IMR-90 (cell line): ENCODE measurements at regions of chrX and their contacts with region 1.

Region 1: GRCh38 chrX:24081661-24082264 is 27.0 kb downstream of the EIF2S3 start:
- DNase-seq: peak; percentile 63
- ATAC-seq: peak; percentile 77
- H3K4me3 ChIP-seq: no peak overlapping the region
- H3K27ac ChIP-seq: no peak overlapping the region
- H3K4me1 ChIP-seq: no peaks in the 10 kb centered on the region
- H3K27me3 ChIP-seq: no peaks in the 10 kb centered on the region
- CTCF ChIP-seq: peak; percentile 58
- POLR2A ChIP-seq: no peak
- RAD21 ChIP-seq: peak; percentile 69

Region 2: DNA sequence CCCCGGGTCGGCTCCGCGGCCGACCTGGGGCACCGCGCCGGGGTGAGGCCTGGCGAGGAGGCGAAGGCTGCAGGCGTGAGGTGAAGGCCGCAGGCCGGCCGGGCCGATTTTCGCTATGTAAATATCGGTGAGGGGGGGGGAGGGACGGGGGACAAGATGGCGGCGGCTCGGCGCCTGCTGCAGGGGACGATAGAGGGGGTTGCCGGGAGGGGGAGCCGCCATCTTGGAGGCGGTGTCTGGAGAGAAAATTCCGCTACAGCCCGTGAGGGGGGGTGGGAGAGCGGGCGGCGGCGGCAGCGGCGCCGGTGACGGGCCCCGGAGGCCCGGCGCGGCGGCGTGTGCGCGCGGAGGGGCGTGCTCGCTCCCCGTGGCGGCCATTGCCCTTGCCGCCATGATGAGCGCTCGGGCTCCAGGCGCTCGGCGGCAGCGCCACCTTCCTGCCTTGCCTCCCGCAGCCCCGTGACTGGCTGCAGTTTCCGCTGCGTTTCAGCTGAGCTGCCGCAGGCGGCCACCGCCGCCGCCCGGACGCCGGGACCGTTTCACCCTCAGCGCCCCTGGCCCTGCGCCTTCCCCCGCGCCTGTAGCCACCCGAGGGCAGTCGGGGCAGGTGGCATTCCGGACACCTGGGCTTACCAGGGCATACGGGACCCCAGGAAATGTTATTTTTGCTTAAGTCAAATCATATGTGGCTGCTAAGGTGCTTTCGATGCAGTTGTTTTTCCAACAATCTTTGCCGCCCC is 68.5 kb after region 1 on chrX:
- CTCF ChIA-PET with region 1: no interaction called
- POLR2A ChIA-PET with region 1: no interaction called
- dilution Hi-C with region 1: no loop called
- in situ Hi-C with region 1: no loop called
- intact Hi-C with region 1: loop called (anchors 2 kb)
- DNase-seq: peak; percentile 92
- ATAC-seq: peak; percentile 79
- H3K4me3 ChIP-seq: peak overlapping the region; percentile 98
- H3K27ac ChIP-seq: peak overlapping the region; percentile 100
- H3K4me1 ChIP-seq: peaks cover 8% of the 10 kb centered on the region
- H3K27me3 ChIP-seq: no peaks in the 10 kb centered on the region
- CTCF ChIP-seq: peak; percentile 61
- POLR2A ChIP-seq: peak; percentile 59
- RAD21 ChIP-seq: peak; percentile 45

Region 3: GRCh38 chrX:24231131-24231540 is 149.4 kb after region 1 on chrX:
- CTCF ChIA-PET with region 1: no interaction called
- POLR2A ChIA-PET with region 1: no interaction called
- dilution Hi-C with region 1: no loop called
- in situ Hi-C with region 1: loop called (anchors 10 kb)
- intact Hi-C with region 1: no loop called
- DNase-seq: peak; percentile 93
- ATAC-seq: peak; percentile 97
- H3K4me3 ChIP-seq: no peak overlapping the region
- H3K27ac ChIP-seq: no peak overlapping the region
- H3K4me1 ChIP-seq: peaks cover 2% of the 10 kb centered on the region; the same call in 1 of the 2 replicates
- H3K27me3 ChIP-seq: peaks cover 4% of the 10 kb centered on the region
- CTCF ChIP-seq: no peak
- POLR2A ChIP-seq: no peak
- RAD21 ChIP-seq: no peak

Region 4: GRCh38 chrX:24241822-24242648 is 160.3 kb after region 1 on chrX:
- CTCF ChIA-PET with region 1: no interaction called
- POLR2A ChIA-PET with region 1: no interaction called
- dilution Hi-C with region 1: no loop called
- in situ Hi-C with region 1: loop called (anchors 10 kb)
- intact Hi-C with region 1: loop called (anchors 2 kb)
- DNase-seq: peak; percentile 39
- ATAC-seq: peak; percentile 65; the same call in 1 of the 2 replicates
- H3K4me3 ChIP-seq: no peak overlapping the region
- H3K27ac ChIP-seq: no peak overlapping the region
- H3K4me1 ChIP-seq: no peaks in the 10 kb centered on the region
- H3K27me3 ChIP-seq: peaks cover 4% of the 10 kb centered on the region; the same call in 1 of the 2 replicates
- CTCF ChIP-seq: peak; percentile 49
- POLR2A ChIP-seq: no peak
- RAD21 ChIP-seq: peak; percentile 57